Tibial artery (tissue), 4 donors: ENCODE measurements at regions of chr20 and their contacts with region 1.

Region 1: GRCh38 chr20:8431538-8432434 is 299.7 kb downstream of the PLCB1 start:
- DNase-seq: no peak
- H3K4me3 ChIP-seq: no peak overlapping the region
- H3K27ac ChIP-seq: no peak overlapping the region
- H3K4me1 ChIP-seq: peaks cover 0 to 16% (median 1%) of the 10 kb centered on the region in 4 donors
- H3K27me3 ChIP-seq: no peaks in the 10 kb centered on the region
- CTCF ChIP-seq: no peak

Region 2: DNA sequence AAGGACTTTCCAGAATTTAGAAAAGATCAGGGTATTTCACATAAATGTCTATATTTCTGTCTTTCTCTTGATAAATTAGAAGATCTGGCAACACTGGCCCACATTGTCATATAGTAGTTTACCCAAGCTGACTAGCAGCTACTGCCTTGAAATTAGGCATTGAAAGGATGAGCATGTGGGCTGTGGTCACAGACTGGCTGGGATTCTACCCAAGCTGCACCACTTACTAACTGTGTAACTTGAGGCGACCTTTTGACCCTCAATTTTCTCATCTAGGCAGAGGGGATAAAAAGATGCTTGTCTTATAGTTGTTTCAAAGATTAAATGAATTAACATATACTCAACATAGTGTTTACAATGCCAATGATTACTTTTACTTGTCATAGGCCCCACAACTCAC is 1817.0 kb before region 1 on chr20:
- intact Hi-C with region 1: loop called (anchors 5 kb)
- DNase-seq: no peak
- H3K4me3 ChIP-seq: no peak overlapping the region
- H3K27ac ChIP-seq: no peak overlapping the region
- H3K4me1 ChIP-seq: no peaks in the 10 kb centered on the region
- H3K27me3 ChIP-seq: no peaks in the 10 kb centered on the region
- CTCF ChIP-seq: no peak